ENCODE measurements at regions of chr9 and their contacts with region 1.

Region 1: DNA sequence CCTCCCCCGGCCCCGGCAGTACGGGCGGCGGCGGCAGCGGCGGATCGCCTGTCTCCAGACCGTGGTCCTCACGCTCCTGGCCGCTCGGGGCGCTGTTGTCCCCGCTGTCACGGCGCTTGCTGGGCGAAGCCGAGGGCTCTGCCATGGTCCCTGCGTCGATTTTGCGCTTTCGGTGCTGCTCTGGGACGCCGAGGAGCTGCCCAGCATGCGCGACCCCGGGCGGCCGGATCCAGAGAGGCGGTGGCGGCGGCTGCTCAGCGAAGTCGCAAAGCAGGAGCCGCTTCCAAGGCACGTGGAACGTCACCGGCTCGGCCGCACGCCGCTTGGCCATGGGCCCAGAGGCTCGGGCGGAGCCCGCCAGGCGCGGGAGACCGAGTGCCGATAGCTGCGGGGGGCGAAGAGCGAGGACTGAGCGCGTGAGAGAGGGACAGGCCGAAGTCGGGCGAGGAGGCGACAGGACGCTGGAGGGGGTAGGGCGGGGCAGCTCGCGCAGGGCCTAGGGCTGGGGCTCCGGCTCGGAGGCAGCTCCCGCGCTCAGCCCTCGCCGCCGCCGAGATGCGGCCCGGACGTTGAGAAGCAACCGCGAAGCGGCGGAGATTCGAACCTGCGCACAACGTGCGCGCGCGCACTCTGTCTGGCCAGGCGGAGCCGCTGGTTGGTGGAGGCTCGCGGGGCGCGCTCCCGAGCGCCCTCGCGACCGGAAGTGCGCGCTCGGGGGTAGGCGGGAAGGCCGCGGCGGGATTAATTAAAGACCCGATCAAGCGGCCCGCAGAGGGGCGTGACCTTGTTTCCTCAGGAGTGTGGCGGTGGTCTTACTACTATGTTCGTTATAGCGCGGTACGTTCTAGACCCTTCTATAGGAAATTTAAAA is at the start of gene C9orf40:
- DNase-seq: peak; percentile 93
- H3K4me3 ChIP-seq: peak within 1 kb of the TSS; percentile 86
- H3K27ac ChIP-seq: peak within 1 kb of the TSS; percentile 97
- H3K4me1 ChIP-seq: no peaks in the 10 kb centered on the region
- H3K27me3 ChIP-seq: no peaks in the 10 kb centered on the region
- CTCF ChIP-seq: peak; percentile 73
- total RNA-seq, gene C9orf40: 14.4 to 21.9 TPM

Region 2: DNA sequence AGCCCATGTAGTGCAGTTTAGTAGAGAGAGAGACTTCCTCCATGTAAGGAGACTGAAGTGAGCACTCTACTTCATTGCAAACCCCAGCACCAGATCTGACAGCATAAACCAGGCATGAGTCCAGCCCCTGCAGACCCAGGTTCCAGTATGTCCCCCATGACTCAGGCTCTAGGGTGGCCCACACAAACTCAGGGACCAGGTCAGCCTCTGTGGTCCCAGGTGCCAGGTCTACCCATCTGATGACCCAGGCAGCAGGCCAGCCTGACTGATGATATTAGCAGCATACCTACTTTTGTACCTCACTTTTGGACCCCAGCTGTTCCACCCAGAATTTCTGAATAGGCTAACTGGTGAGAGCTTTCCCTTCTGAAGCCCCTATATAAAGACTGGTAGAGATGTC is 1153.1 kb before region 1 on chr9:
- intact Hi-C with region 1: no loop called
- DNase-seq: no peak
- H3K4me3 ChIP-seq: no peak overlapping the region
- H3K27ac ChIP-seq: no peak overlapping the region
- H3K4me1 ChIP-seq: no peaks in the 10 kb centered on the region
- H3K27me3 ChIP-seq: no peaks in the 10 kb centered on the region
- CTCF ChIP-seq: no peak

Region 3: DNA sequence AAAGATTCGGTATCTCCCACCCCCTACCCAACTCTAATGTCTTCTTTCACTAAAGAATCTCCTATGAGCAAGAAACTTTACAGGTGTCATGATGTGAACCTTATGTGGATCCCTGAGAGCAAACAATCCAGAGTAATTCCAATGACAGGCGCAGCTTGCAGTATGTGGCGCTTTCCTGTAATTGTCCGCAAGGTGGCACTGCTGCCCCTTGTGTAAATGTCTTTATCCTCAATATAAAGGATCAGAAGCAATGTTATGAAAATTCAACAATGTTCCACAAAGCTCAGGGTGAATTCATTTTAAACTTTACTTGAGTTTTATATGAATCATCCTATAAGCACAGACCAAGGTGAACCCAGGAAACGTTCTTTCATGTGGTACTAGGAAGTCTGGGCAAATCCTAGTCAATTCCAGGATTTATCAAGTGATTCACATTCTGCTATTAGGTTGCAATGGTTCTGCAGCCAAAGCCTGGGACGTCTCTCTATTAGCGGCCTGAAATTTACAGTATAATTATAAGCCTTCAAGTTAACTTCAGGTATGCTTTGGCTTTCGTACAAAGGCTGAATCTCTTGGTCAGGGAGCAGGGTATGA is 178.5 kb before region 1 on chr9:
- intact Hi-C with region 1: loop called (anchors 10 kb)
- DNase-seq: peak; percentile 86
- H3K4me3 ChIP-seq: no peak overlapping the region
- H3K27ac ChIP-seq: no peak overlapping the region
- H3K4me1 ChIP-seq: no peaks in the 10 kb centered on the region
- H3K27me3 ChIP-seq: no peaks in the 10 kb centered on the region
- CTCF ChIP-seq: peak; percentile 91

Region 4: DNA sequence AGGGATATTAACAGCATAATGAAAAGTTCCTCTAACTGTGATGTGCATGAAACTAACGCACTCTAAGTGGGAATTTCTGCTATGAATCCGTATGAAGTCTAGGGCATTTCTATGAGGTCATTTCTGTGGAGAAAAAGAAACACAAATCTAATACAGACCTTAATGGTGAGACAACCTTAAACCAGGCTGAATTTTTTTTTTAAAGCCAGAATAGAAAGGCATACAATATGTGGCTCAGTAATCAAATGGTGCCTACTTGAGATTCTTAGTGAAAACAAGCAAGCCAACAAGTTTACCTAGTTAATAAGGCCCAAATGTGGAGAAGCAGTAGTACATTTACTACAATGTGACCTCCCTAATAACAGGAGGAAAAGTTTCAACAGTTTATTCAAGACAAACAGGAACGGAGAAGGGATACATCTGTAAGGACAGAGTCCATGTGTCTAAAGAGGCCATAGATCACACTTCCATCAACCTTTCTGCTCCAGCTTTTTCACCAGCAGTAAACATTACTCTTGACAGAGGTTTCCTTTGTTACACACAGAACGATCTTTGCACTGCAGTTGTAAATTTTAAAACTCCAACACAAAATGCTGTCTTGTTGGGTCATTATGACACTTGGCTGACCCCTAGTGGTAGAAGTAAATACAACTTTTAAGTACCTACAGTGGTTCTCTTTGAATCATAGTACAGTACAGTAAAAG is 49.4 kb after region 1 on chr9:
- intact Hi-C with region 1: loop called (anchors 5 kb)
- DNase-seq: peak; percentile 48
- H3K4me3 ChIP-seq: no peak overlapping the region
- H3K27ac ChIP-seq: peak overlapping the region; percentile 14
- H3K4me1 ChIP-seq: no peaks in the 10 kb centered on the region
- H3K27me3 ChIP-seq: no peaks in the 10 kb centered on the region
- CTCF ChIP-seq: peak; percentile 79

Measured in colonic mucosa (tissue), 4 donors.